ENCODE measurements at regions of chr9 and their contacts with region 1.

Region 1: DNA sequence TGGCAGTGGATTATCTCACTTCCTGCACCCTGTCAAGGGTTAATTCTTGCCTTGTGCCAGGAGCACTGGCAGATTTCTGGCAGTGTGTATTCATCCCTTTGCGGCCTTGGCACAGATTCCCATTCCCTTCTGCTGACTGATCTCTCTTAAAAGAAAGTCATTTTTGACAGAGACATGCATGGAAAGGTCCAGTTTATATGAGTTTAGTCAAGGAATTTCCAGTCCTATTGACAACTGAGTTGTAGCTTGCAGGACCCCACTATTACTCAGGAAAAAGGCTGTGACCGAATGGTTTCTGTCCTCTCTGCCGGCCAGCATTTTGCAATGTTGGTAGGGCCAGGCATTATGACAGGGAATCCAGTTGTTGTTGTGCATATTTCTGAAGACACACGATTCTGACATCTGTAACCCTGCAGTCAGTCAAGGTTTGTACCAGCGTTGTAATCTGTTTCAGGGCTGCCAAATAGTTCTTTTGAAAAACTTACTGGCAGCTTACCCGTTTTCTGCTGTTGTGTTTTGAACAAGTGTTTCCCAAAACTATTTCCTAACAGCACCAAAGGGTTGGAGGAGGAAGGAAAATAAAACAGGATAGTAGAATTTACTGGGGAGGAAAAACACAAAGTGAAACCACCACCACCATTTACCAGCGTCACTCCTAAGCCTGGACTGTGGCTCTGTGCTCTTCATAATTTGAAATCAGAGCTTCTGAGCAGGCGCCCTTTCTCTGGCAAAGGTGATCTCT is 243.4 kb upstream of the KLF4 start:
- DNase-seq: peak in 1 of 2 donors; percentile 87
- H3K4me3 ChIP-seq: peak overlapping the region; percentile 16 to 40
- H3K27ac ChIP-seq: peak overlapping the region; percentile 83 to 86
- H3K4me1 ChIP-seq: peaks cover 0 to 16% of the 10 kb centered on the region in 2 donors
- H3K27me3 ChIP-seq: no peaks in the 10 kb centered on the region
- CTCF ChIP-seq: no peak

Region 2: DNA sequence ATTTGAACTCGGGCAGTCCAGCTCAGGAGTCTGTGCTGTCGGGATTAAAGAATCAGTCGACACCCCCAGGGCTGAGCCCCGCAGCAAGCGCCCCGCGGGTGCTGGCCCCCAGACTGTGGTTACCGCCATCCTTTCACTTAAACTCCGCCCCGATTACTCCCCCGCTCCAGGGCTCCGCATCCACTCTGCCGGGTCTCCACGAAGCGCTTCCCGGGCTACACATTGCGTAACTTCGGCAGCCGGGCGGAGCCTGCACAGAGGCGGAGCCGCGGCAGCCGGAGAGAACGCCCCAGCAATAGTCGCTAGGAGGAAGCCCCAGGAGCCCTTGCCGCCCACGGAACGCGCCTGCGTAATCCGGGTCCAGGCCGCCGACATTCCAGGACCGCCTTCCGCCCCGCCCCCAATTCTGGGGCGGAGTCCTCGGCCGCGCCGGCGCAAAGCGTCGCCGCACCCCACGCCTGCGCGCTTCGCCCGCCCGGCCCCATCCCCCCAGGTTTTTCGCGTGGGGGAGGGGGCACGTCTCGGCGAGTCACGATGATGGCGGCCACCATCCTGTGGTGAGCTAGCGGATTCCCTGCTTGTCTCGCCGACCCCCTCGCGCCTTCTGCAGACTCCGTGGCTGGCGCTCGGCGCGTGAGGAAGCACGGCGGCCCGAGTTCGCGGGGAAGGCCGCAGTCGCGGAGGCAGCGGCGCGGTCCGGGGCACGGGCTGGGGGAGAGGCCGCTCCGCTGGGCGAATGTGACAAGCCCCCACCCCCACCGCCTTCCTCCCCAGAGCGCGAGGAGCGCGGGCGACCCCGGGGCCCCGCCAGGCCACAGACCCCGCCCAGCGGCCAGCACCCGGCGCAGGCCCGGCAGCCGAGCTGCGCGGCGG is 450.0 kb before region 1 on chr9 and contains the start of gene RAD23B:
- intact Hi-C with region 1: loop called (anchors 5 kb)
- DNase-seq: peak; percentile 93 to 99
- H3K4me3 ChIP-seq: peak within 1 kb of the TSS; percentile 82 to 95
- H3K27ac ChIP-seq: peak within 1 kb of the TSS; percentile 98 to 99
- H3K4me1 ChIP-seq: peaks cover 0 to 8% of the 10 kb centered on the region in 2 donors
- H3K27me3 ChIP-seq: no peaks in the 10 kb centered on the region
- CTCF ChIP-seq: no peak
- total RNA-seq, gene RAD23B: 57.7 TPM

Region 3: DNA sequence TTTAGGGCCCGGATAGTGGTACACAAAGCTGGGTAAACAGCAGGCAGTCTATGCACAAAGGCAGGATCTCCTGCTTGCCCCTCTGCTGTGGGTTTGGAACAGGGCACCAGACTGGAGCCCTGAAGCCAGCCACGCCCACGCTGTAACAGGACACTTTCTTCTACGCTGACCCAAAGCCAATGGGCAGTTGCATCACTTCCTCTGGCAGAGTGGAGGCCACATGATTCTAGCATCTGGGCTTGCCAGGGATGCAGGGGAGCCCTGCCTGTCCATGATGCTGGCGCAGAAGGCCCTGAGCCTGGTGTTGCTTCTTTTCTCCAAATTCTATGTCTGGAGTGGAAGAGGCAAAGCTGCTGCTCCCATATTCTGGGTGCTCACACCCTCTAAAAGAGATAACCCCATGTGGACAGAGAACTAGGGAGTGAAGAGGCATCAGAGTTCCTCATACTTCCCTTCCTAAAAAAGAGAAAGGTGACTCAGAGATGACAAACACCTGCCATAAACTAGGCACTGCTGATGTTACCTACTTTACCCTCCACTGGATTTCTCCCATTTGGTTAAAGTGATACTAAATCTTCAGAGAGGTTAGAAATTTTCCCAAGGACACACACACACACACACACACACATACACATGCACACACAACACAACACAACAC is 17.0 kb after region 1 on chr9:
- intact Hi-C with region 1: loop called (anchors 1 kb)
- DNase-seq: peak; percentile 86 to 96
- H3K4me3 ChIP-seq: no peak overlapping the region
- H3K27ac ChIP-seq: peak overlapping the region; percentile 92 to 95
- H3K4me1 ChIP-seq: peaks cover 22 to 31% of the 10 kb centered on the region in 2 donors
- H3K27me3 ChIP-seq: no peaks in the 10 kb centered on the region
- CTCF ChIP-seq: no peak

Region 4: DNA sequence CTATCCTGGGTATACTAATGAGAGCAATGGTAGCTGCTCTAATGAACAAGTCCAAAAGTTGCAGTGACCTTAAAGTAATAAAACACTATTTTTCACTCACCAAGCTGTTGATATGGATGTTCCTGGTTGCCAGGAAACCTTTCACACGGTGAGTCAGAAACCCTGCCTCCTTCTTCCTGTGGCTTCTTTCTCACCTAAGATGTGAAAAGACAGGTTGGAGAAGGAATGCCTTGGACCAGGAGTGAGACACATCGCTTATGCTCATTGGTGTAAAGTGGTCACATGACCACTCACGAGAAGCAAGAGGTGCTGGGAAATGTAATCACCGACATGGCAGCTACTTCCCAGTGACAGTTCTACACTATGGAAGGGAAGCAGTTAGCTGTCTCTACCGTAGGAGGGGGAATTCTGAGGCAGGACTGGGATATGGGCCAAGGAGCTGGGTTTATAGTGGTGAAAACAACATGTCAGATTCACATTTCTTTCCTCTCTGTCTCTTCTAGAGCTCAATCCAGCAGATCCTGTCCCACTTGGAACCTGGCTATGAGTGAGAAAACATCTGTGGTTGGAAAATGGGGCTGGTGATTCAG is 77.0 kb after region 1 on chr9:
- intact Hi-C with region 1: no loop called
- DNase-seq: no peak
- H3K4me3 ChIP-seq: no peak overlapping the region
- H3K27ac ChIP-seq: no peak overlapping the region
- H3K4me1 ChIP-seq: no peaks in the 10 kb centered on the region
- H3K27me3 ChIP-seq: no peaks in the 10 kb centered on the region
- CTCF ChIP-seq: no peak

Region 5: GRCh38 chr9:107847978-107848964 is 115.3 kb after region 1 on chr9:
- intact Hi-C with region 1: loop called (anchors 5 kb)
- DNase-seq: no peak
- H3K4me3 ChIP-seq: no peak overlapping the region
- H3K27ac ChIP-seq: peak overlapping the region; percentile 62 to 68
- H3K4me1 ChIP-seq: peaks cover 0 to 10% of the 10 kb centered on the region in 2 donors
- H3K27me3 ChIP-seq: no peaks in the 10 kb centered on the region
- CTCF ChIP-seq: no peak

Region 6: GRCh38 chr9:108053555-108054061 is 320.7 kb after region 1 on chr9:
- intact Hi-C with region 1: loop called (anchors 5 kb)
- DNase-seq: peak in 1 of 2 donors; percentile 79
- H3K4me3 ChIP-seq: peak overlapping the region in 1 of 2 donors; percentile 17
- H3K27ac ChIP-seq: peak overlapping the region; percentile 40 to 49
- H3K4me1 ChIP-seq: peaks cover 0 to 18% of the 10 kb centered on the region in 2 donors
- H3K27me3 ChIP-seq: no peaks in the 10 kb centered on the region
- CTCF ChIP-seq: no peak

Region 7: GRCh38 chr9:108444400-108445358 is 711.7 kb after region 1 on chr9:
- intact Hi-C with region 1: loop called (anchors 10 kb)
- DNase-seq: peak; percentile 10 to 75
- H3K4me3 ChIP-seq: peak overlapping the region in 1 of 2 donors; percentile 16
- H3K27ac ChIP-seq: peak overlapping the region; percentile 63 to 69
- H3K4me1 ChIP-seq: peaks cover 0 to 37% of the 10 kb centered on the region in 2 donors
- H3K27me3 ChIP-seq: no peaks in the 10 kb centered on the region
- CTCF ChIP-seq: no peak

Measured in ascending aorta (tissue), 2 donors.